A673 (cell line): ENCODE measurements at regions of chr16 and their contacts with region 1.

Region 1: GRCh38 chr16:87416826-87417527 is 24.8 kb downstream of the MAP1LC3B start:
- DNase-seq: peak; percentile 58
- H3K4me3 ChIP-seq: no peak overlapping the region
- H3K27ac ChIP-seq: no peak overlapping the region
- H3K4me1 ChIP-seq: no peaks in the 10 kb centered on the region
- H3K27me3 ChIP-seq: no peaks in the 10 kb centered on the region
- CTCF ChIP-seq: peak; percentile 68

Region 2: GRCh38 chr16:87540945-87541877 is 124.2 kb after region 1 on chr16:
- CTCF ChIA-PET with region 1: no interaction called
- POLR2A ChIA-PET with region 1: no interaction called
- intact Hi-C with region 1: loop called (anchors 10 kb)
- DNase-seq: peak; percentile 54
- H3K4me3 ChIP-seq: peak overlapping the region; percentile 30
- H3K27ac ChIP-seq: no peak overlapping the region
- H3K4me1 ChIP-seq: peaks cover 5% of the 10 kb centered on the region
- H3K27me3 ChIP-seq: peaks cover 21% of the 10 kb centered on the region
- CTCF ChIP-seq: no peak